Prostate gland (tissue), 2 donors: ENCODE measurements at regions of chr11 and their contacts with region 1.

Region 1: GRCh38 chr11:86869966-86870570 is 69.7 kb downstream of the PRSS23 start:
- DNase-seq: peak; percentile 28
- H3K4me3 ChIP-seq: no peak overlapping the region
- H3K27ac ChIP-seq: no peak overlapping the region
- H3K4me1 ChIP-seq: no peaks in the 10 kb centered on the region
- H3K27me3 ChIP-seq: no peaks in the 10 kb centered on the region
- CTCF ChIP-seq: peak; percentile 23 to 71 (median 62)
- POLR2A ChIP-seq: no peak

Region 2: GRCh38 chr11:86919557-86920210 is 49.6 kb after region 1 on chr11:
- intact Hi-C with region 1: loop called (anchors 2 kb)
- DNase-seq: no peak
- H3K4me3 ChIP-seq: no peak overlapping the region
- H3K27ac ChIP-seq: no peak overlapping the region
- H3K4me1 ChIP-seq: no peaks in the 10 kb centered on the region
- H3K27me3 ChIP-seq: no peaks in the 10 kb centered on the region
- CTCF ChIP-seq: peak in 3 of 4 experiments; percentile 46 to 66 (median 58)
- POLR2A ChIP-seq: no peak